Activated CD8-positive, alpha-beta T cell treated with anti-CD3 and anti-CD28 coated beads for 36 hours (primary cell): ENCODE measurements at regions of chr6 and their contacts with region 1.

Region 1: DNA sequence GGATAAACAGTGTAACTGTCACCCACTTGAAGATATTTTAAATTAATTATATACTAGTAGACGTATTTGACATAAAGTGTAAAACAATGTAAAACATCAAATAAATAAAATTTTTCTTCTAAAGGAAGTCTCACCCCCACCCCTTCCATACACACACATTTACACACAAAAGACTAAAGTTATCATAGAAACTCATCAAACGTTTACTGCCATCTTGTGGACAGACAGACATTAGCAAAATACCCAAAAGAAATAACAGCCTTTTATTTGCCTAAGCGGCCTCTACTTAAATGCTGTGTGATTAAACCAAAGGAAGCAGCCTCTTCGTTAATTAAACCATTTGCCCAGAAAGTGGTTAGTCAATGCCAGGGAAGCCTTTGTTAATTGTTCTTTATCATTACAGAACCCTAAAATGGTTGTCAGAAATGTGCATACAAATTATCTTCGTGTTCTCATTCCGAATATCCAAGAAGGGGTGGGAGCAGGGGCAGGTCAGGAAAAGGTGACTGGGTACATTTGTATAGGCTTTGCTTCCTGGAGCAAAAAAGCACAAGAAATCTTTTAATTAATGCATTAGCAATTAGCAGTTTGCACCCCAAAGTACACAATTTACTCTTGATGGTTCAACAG is 176.2 kb upstream of the SASH1 start:
- DNase-seq: no peak
- ATAC-seq: no peak
- H3K4me3 Mint-ChIP-seq: no peak overlapping the region
- H3K27ac Mint-ChIP-seq: no peak overlapping the region
- H3K4me1 Mint-ChIP-seq: no peaks in the 10 kb centered on the region
- H3K27me3 Mint-ChIP-seq: peaks cover 6% of the 10 kb centered on the region
- CTCF ChIP-seq: peak; percentile 70

Region 2: GRCh38 chr6:147506704-147507114 is 659.7 kb before region 1 on chr6:
- CTCF ChIA-PET with region 1: interaction called, 21 read pairs
- POLR2A ChIA-PET with region 1: no interaction called
- intact Hi-C with region 1: loop called (anchors 2 kb)
- DNase-seq: peak; percentile 75
- ATAC-seq: peak; percentile 58
- H3K4me3 Mint-ChIP-seq: no peak overlapping the region
- H3K27ac Mint-ChIP-seq: no peak overlapping the region
- H3K4me1 Mint-ChIP-seq: peaks cover 8% of the 10 kb centered on the region
- H3K27me3 Mint-ChIP-seq: peaks cover 49% of the 10 kb centered on the region
- CTCF ChIP-seq: peak; percentile 74

Region 3: GRCh38 chr6:148144917-148145521 is 21.4 kb before region 1 on chr6:
- CTCF ChIA-PET with region 1: interaction called, 12 read pairs
- POLR2A ChIA-PET with region 1: no interaction called
- intact Hi-C with region 1: loop called (anchors 1 kb)
- DNase-seq: peak; percentile 82
- ATAC-seq: no peak
- H3K4me3 Mint-ChIP-seq: no peak overlapping the region
- H3K27ac Mint-ChIP-seq: no peak overlapping the region
- H3K4me1 Mint-ChIP-seq: peaks cover 11% of the 10 kb centered on the region
- H3K27me3 Mint-ChIP-seq: peaks cover 1% of the 10 kb centered on the region
- CTCF ChIP-seq: peak; percentile 89

Region 4: DNA sequence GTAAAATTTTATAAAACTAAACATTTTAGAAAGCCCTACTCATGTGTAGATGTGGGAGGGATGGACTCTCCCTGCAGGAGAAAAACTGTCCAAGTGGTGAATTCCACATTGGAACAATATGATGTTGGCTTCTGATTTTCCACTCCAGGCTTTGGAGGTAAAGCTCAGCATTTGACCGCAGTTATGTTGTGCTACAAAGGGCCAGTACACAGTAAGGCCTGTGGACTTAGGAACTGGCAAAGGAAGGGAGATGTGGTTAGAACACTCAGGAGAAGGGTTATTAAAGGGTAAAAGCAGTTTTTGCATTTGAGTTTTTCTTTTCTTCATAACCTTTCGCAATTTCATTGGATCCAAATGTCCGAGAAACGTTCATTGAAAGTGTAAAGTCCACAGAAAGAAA is 25.9 kb after region 1 on chr6:
- CTCF ChIA-PET with region 1: no interaction called
- POLR2A ChIA-PET with region 1: no interaction called
- intact Hi-C with region 1: no loop called
- DNase-seq: no peak
- ATAC-seq: no peak
- H3K4me3 Mint-ChIP-seq: no peak overlapping the region
- H3K27ac Mint-ChIP-seq: no peak overlapping the region
- H3K4me1 Mint-ChIP-seq: no peaks in the 10 kb centered on the region
- H3K27me3 Mint-ChIP-seq: peaks cover 33% of the 10 kb centered on the region
- CTCF ChIP-seq: no peak

Region 5: DNA sequence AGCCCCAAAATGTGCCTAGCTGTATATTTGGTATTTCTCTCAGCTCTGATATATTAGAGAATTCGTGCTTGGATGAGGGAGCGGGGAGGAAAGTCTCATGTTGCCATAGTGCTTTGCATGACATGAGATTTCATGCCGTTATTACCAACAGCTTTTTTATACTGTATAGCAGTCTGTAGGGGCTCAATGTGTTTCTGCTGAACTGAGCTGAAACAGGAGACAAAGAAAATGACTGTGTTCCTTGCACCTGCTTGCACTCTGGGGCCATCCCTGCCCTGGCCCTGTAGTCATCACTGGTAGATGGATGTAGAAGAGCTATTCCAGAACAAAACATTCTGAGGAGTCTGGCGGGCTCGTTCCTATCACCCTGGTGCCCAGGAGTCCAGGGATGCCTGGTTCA is 48.2 kb after region 1 on chr6:
- CTCF ChIA-PET with region 1: no interaction called
- POLR2A ChIA-PET with region 1: no interaction called
- intact Hi-C with region 1: no loop called
- DNase-seq: no peak
- ATAC-seq: no peak
- H3K4me3 Mint-ChIP-seq: no peak overlapping the region
- H3K27ac Mint-ChIP-seq: no peak overlapping the region
- H3K4me1 Mint-ChIP-seq: no peaks in the 10 kb centered on the region
- H3K27me3 Mint-ChIP-seq: peaks cover 51% of the 10 kb centered on the region
- CTCF ChIP-seq: no peak